ENCODE measurements at regions of chr14 and their contacts with region 1.

Region 1: DNA sequence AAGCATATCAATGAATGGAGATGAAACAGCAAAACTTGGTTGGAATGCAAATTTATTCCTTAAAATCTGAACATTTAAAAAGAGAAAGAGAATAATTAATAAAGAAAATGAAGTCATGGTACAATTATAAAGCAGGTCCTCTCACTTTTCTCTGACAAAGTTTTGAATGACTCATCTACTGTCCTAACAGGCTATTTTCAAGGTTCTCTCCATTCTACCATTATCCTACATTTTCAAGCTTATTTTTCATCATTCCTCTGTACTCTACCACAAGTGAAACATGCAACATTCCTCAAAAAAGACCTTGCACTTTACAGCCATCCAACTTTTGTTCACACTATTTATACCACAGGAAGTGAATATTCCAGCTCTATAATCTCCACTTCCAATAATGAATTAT is 36.9 kb upstream of the AP4S1 start:
- DNase-seq: no peak
- ATAC-seq: no peak
- H3K4me3 ChIP-seq: no peak overlapping the region
- H3K27ac ChIP-seq: no peak overlapping the region
- H3K4me1 ChIP-seq: peaks cover 35% of the 10 kb centered on the region
- H3K27me3 ChIP-seq: no peaks in the 10 kb centered on the region
- CTCF ChIP-seq: no peak

Region 2: GRCh38 chr14:31084385-31084784 is 95.9 kb after region 1 on chr14:
- intact Hi-C with region 1: loop called (anchors 10 kb)
- DNase-seq: no peak
- ATAC-seq: peak; percentile 63
- H3K4me3 ChIP-seq: no peak overlapping the region
- H3K27ac ChIP-seq: no peak overlapping the region
- H3K4me1 ChIP-seq: no peaks in the 10 kb centered on the region
- H3K27me3 ChIP-seq: no peaks in the 10 kb centered on the region
- CTCF ChIP-seq: no peak